ENCODE measurements at regions of chr4 and their contacts with region 1.

Region 1: DNA sequence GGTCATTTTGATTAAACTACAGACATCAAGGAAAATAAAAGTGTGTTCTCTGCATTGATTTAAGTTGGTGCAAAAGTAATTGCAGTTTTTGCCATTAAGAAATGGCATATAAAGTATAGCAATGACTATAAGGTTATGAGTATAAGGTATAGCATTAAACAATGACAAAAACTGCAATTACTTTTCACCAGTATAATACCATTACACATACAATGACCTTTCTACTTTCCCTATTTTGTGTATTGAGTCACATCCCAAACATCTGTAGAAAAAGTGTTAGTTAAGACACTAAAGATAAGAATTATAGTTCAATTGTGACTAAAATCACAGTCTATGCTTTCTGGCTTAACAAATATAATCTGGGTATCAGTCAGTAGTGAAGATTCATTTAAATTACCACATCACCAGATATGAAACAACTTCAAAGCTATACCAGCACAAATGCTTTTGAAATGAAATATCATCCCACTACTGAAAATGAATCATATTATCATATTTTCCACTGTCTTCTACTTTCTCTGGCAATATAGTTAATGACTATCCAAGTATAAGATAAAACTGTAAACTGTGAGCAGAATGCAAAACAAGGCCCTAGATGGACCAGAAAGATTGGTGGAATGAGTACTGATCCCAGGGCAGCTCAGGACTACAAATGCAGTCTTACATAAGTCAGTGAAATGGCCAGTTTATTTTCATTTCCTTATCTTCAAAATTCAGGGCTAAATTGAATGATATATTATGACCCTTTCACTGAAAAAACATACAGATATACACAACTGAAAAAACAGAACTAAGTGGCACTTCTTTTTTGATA is 241.1 kb downstream of the ANTXR2 start:
- DNase-seq: no peak
- H3K4me3 Mint-ChIP-seq: no peak overlapping the region
- H3K27ac Mint-ChIP-seq: no peak overlapping the region
- H3K4me1 Mint-ChIP-seq: peaks cover 12% of the 10 kb centered on the region
- H3K27me3 Mint-ChIP-seq: peaks cover 8% of the 10 kb centered on the region

Region 2: GRCh38 chr4:79528241-79528706 is 303.6 kb before region 1 on chr4:
- CTCF ChIA-PET with region 1: no interaction called
- intact Hi-C with region 1: loop called (anchors 5 kb)
- DNase-seq: peak; percentile 14
- H3K4me3 Mint-ChIP-seq: no peak overlapping the region
- H3K27ac Mint-ChIP-seq: no peak overlapping the region
- H3K4me1 Mint-ChIP-seq: peaks cover 11% of the 10 kb centered on the region
- H3K27me3 Mint-ChIP-seq: peaks cover 10% of the 10 kb centered on the region

Region 3: GRCh38 chr4:80007745-80008149 is 175.8 kb after region 1 on chr4:
- CTCF ChIA-PET with region 1: no interaction called
- intact Hi-C with region 1: loop called (anchors 5 kb)
- DNase-seq: no peak
- H3K4me3 Mint-ChIP-seq: no peak overlapping the region
- H3K27ac Mint-ChIP-seq: no peak overlapping the region
- H3K4me1 Mint-ChIP-seq: peaks cover 38% of the 10 kb centered on the region
- H3K27me3 Mint-ChIP-seq: no peaks in the 10 kb centered on the region

Measured in activated naive CD4-positive, alpha-beta T cell treated with anti-CD3 and anti-CD28 coated beads for 36 hours (primary cell).